Naive thymus-derived CD4-positive, alpha-beta T cell (primary cell): ENCODE measurements at regions of chr10 and their contacts with region 1.

Region 1: DNA sequence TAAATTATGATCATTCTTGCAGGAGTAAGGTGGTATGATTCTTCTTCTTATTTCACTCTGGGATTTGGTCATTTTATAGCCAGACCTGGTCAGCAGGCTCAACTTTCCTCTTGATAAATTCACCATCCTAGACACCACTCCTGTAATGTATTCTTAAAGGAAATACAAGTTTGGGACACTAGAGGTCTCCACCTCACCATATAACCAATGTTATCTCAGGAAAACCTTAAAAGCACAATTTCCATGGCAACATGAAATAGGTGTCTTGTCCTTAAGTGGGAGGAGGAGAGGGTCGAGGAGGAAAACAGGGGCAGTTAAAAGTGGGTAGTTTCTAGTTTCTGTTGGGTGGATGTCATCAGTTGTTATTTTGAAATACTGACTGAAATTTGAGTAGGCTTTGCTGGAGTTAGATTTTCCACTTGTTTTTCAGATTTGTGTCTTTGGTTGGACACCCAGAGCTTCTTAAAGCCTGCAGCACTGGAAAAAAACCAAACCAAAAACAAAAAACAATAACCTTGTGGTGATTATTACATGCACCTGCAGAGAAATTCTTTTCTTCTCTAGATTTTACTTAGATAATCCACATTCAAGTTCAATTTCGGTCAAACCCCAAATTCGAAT is 163.1 kb downstream of the PRKCQ start:
- DNase-seq: peak in 7 of 9 donors; percentile 36 to 59 (median 43)
- ATAC-seq: peak; percentile 88
- H3K4me3 ChIP-seq: no peak overlapping the region
- H3K4me3 Mint-ChIP-seq: no peak overlapping the region
- H3K27ac ChIP-seq: no peak overlapping the region
- H3K27ac Mint-ChIP-seq: no peak overlapping the region
- H3K4me1 ChIP-seq: no peaks in the 10 kb centered on the region
- H3K4me1 Mint-ChIP-seq: peaks cover 0 to 6% (median 0%) of the 10 kb centered on the region in 7 donors
- H3K27me3 ChIP-seq: no peaks in the 10 kb centered on the region
- H3K27me3 Mint-ChIP-seq: no peaks in the 10 kb centered on the region

Region 2: DNA sequence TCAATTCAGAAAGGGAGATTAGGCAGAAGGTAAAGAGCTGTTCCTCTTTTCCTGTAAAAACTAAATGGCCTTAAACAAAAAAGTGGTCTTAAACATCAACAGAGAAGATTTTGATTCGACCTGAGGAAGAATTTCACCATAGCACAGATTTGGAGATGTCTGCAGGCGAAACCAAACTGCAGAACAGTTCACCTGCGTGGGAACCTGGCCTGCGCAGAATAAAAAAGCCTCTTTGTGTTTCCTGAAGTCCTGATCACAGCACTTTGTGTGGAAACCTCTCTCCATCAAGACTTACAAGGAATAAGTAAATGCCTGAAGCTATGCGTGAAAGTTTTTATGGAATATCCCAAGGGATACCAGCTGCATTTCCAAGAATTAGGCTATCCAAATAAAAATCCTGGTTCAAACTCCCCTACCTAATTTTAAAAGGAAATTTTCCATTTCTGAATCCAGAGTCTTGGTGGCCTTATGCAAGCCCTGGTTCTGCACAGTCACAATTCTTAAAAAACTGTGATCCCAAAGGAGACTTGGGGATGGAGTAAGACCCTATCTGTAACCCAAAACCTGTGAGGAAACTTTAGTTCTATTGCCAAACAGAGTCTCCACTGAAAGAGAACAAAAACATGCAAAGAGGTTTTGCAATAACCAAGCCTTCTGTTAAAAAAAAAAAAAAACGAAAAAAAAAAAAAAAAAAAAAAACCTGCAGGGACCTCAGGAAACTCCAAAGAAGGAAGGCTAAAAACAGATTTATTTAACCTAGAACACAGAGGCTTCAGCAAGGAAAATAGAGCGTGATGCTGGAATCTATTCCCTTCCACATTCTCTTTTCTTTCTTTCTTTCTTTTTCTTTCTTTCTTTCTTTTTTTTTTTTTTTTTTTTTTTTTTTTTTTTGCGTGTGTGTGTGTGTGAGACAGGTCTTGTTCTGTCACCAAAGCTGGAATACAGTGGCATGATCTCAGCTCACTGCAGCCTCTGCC is 881.8 kb before region 1 on chr10:
- CTCF ChIA-PET with region 1: no interaction called
- POLR2A ChIA-PET with region 1: no interaction called
- intact Hi-C with region 1: no loop called
- DNase-seq: no peak
- ATAC-seq: no peak
- H3K4me3 ChIP-seq: no peak overlapping the region
- H3K4me3 Mint-ChIP-seq: no peak overlapping the region
- H3K27ac ChIP-seq: no peak overlapping the region
- H3K27ac Mint-ChIP-seq: no peak overlapping the region
- H3K4me1 ChIP-seq: no peaks in the 10 kb centered on the region
- H3K4me1 Mint-ChIP-seq: peaks cover 0 to 8% (median 4%) of the 10 kb centered on the region in 7 donors
- H3K27me3 ChIP-seq: no peaks in the 10 kb centered on the region
- H3K27me3 Mint-ChIP-seq: peaks cover 0 to 9% (median 0%) of the 10 kb centered on the region in 5 donors

Region 3: GRCh38 chr10:5737352-5737751 is 679.6 kb before region 1 on chr10:
- CTCF ChIA-PET with region 1: no interaction called
- POLR2A ChIA-PET with region 1: no interaction called
- intact Hi-C with region 1: no loop called
- DNase-seq: no peak
- ATAC-seq: no peak
- H3K4me3 ChIP-seq: no peak overlapping the region
- H3K4me3 Mint-ChIP-seq: peak overlapping the region in 1 of 10 donors; percentile 30
- H3K27ac ChIP-seq: no peak overlapping the region
- H3K27ac Mint-ChIP-seq: peak overlapping the region in 5 of 9 donors; percentile 20 to 80 (median 37)
- H3K4me1 ChIP-seq: no peaks in the 10 kb centered on the region
- H3K4me1 Mint-ChIP-seq: peaks cover 9 to 37% (median 22%) of the 10 kb centered on the region in 7 donors
- H3K27me3 ChIP-seq: no peaks in the 10 kb centered on the region
- H3K27me3 Mint-ChIP-seq: no peaks in the 10 kb centered on the region

Region 4: GRCh38 chr10:6445501-6446316 is 28.7 kb after region 1 on chr10:
- CTCF ChIA-PET with region 1: interaction called, 4 read pairs
- POLR2A ChIA-PET with region 1: no interaction called
- intact Hi-C with region 1: loop called in 1 of 2 experiments (anchors 1 kb)
- DNase-seq: peak in 8 of 9 donors; percentile 28 to 49 (median 43)
- ATAC-seq: peak; percentile 64
- H3K4me3 ChIP-seq: no peak overlapping the region
- H3K4me3 Mint-ChIP-seq: peak overlapping the region in 5 of 10 donors; percentile 0 to 60 (median 30)
- H3K27ac ChIP-seq: peak overlapping the region; percentile 17
- H3K27ac Mint-ChIP-seq: peak overlapping the region; percentile 4 to 84 (median 66)
- H3K4me1 ChIP-seq: no peaks in the 10 kb centered on the region
- H3K4me1 Mint-ChIP-seq: peaks cover 10 to 49% (median 31%) of the 10 kb centered on the region in 7 donors
- H3K27me3 ChIP-seq: no peaks in the 10 kb centered on the region
- H3K27me3 Mint-ChIP-seq: no peaks in the 10 kb centered on the region

Region 5: DNA sequence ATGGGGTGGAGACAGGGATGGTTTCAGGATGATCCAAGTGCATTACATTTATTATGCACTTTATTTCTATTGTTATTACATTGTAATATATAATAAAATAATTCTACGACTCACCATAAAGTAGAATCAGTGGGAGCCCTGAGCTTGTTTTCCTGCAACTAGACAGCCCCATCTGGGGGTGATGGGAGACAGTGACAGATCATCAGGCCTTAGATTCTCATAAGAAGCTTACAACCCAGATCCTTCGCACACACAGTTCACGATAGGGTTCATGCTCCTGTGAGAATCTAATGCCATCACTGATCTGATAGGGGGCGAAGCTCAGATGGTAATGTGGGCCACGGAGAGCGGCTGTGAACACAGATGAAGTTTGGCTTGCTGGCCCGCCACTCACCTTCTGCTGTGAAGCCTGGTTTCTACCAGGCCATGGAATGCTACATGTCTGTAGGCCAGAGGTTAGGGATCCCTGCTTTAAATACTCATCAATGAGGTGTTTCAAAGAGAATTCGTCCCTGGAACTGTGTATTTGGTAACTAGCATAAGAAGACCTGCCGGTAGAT is 184.3 kb after region 1 on chr10:
- CTCF ChIA-PET with region 1: interaction called, 3 read pairs
- POLR2A ChIA-PET with region 1: no interaction called
- intact Hi-C with region 1: loop called in 1 of 2 experiments (anchors 1 kb)
- DNase-seq: peak in 6 of 9 donors; percentile 62 to 71 (median 65)
- ATAC-seq: peak; percentile 65
- H3K4me3 ChIP-seq: no peak overlapping the region
- H3K4me3 Mint-ChIP-seq: peak overlapping the region; percentile 52 to 86 (median 67)
- H3K27ac ChIP-seq: peak overlapping the region; percentile 63
- H3K27ac Mint-ChIP-seq: peak overlapping the region; percentile 60 to 100 (median 96)
- H3K4me1 ChIP-seq: peaks cover 17 to 56% of the 10 kb centered on the region in 2 donors
- H3K4me1 Mint-ChIP-seq: peaks cover 37 to 94% (median 86%) of the 10 kb centered on the region in 7 donors
- H3K27me3 ChIP-seq: no peaks in the 10 kb centered on the region
- H3K27me3 Mint-ChIP-seq: no peaks in the 10 kb centered on the region

Region 6: DNA sequence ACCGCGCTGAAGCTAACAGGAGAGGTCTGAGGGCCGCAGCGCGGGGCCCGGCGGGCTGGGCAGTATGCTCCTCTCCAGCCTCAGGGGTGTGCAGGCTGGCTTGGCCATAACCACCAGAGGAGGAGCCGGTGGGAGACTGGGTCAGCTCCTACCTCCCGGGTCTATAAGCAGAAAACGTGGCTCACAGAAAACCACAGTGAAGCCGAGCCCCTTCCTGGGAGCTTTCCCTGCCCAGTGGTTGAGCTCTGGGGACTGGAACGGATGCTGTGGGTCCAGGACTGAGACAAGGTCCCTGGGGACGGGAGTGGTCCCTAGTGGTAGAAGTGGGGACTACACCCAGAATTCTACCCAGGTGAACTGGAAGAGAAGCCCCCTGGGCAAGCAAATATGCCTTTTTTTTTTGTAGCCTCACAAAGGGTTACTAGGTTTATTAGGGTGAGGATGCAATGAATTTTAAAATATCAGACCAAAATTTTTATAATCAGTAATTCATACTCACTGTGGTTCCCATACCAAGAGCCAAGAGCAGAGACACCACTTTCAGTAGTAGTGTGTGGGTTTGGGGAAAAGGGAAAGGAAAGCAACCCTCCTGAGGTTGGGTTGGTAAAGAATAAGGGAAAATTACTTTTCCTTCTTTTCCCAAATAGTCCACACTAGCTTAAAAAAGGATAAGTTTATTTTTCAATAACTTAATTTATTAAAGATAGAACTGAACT is 231.0 kb after region 1 on chr10:
- CTCF ChIA-PET with region 1: interaction called, 5 read pairs
- POLR2A ChIA-PET with region 1: no interaction called
- intact Hi-C with region 1: loop called in 1 of 2 experiments (anchors 1 kb)
- DNase-seq: peak; percentile 37 to 75 (median 64)
- ATAC-seq: peak; percentile 94
- H3K4me3 ChIP-seq: no peak overlapping the region
- H3K4me3 Mint-ChIP-seq: peak overlapping the region in 1 of 10 donors; percentile 32
- H3K27ac ChIP-seq: no peak overlapping the region
- H3K27ac Mint-ChIP-seq: peak overlapping the region in 3 of 9 donors; percentile 19 to 67 (median 38)
- H3K4me1 ChIP-seq: peaks cover 5 to 10% of the 10 kb centered on the region in 2 donors
- H3K4me1 Mint-ChIP-seq: peaks cover 0 to 46% (median 27%) of the 10 kb centered on the region in 7 donors
- H3K27me3 ChIP-seq: no peaks in the 10 kb centered on the region
- H3K27me3 Mint-ChIP-seq: no peaks in the 10 kb centered on the region

Region 7: DNA sequence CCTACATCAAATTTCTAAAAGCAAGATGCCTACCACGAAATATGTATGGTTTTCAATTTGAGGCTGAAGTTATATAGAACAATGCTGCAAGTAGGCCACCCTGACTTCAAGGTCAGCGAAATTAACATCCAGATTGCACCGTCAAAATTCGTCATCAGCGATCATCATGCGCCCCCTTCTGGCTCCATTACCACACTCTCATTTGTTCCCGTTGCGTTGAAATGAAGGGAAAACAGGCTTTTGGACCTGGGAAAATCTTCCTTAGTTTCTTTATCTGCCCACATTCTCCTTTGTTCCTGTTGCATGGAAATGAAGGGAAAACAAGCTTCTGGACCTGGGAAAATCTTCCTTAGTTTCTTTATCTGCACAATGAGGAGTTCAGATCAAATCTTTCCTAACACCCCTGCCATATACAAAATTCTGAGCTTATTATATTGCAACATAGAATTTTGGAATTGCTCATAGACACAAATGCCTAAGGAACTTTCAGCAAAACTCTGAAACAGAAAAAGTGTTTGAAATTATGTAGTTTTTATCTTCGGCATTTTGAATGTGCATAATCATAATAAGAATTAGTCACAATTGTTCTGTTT is 261.3 kb after region 1 on chr10:
- CTCF ChIA-PET with region 1: interaction called, 32 read pairs
- POLR2A ChIA-PET with region 1: no interaction called
- intact Hi-C with region 1: loop called (anchors 1 kb)
- DNase-seq: peak in 8 of 9 donors; percentile 24 to 55 (median 48)
- ATAC-seq: peak; percentile 56
- H3K4me3 ChIP-seq: no peak overlapping the region
- H3K4me3 Mint-ChIP-seq: no peak overlapping the region
- H3K27ac ChIP-seq: no peak overlapping the region
- H3K27ac Mint-ChIP-seq: no peak overlapping the region
- H3K4me1 ChIP-seq: no peaks in the 10 kb centered on the region
- H3K4me1 Mint-ChIP-seq: peaks cover 0 to 12% (median 0%) of the 10 kb centered on the region in 7 donors
- H3K27me3 ChIP-seq: no peaks in the 10 kb centered on the region
- H3K27me3 Mint-ChIP-seq: peaks cover 0 to 66% (median 0%) of the 10 kb centered on the region in 5 donors

Region 8: GRCh38 chr10:6920072-6921019 is 503.3 kb after region 1 on chr10:
- CTCF ChIA-PET with region 1: no interaction called
- POLR2A ChIA-PET with region 1: no interaction called
- intact Hi-C with region 1: loop called in 1 of 2 experiments (anchors 10 kb)
- DNase-seq: peak; percentile 47 to 74 (median 69)
- ATAC-seq: peak; percentile 97
- H3K4me3 ChIP-seq: no peak overlapping the region
- H3K4me3 Mint-ChIP-seq: peak overlapping the region in 7 of 10 donors; percentile 13 to 45 (median 26)
- H3K27ac ChIP-seq: no peak overlapping the region
- H3K27ac Mint-ChIP-seq: no peak overlapping the region
- H3K4me1 ChIP-seq: peaks cover 0 to 21% of the 10 kb centered on the region in 2 donors
- H3K4me1 Mint-ChIP-seq: peaks cover 0 to 25% (median 12%) of the 10 kb centered on the region in 7 donors
- H3K27me3 ChIP-seq: no peaks in the 10 kb centered on the region
- H3K27me3 Mint-ChIP-seq: peaks cover 0 to 14% (median 5%) of the 10 kb centered on the region in 5 donors

Region 9: DNA sequence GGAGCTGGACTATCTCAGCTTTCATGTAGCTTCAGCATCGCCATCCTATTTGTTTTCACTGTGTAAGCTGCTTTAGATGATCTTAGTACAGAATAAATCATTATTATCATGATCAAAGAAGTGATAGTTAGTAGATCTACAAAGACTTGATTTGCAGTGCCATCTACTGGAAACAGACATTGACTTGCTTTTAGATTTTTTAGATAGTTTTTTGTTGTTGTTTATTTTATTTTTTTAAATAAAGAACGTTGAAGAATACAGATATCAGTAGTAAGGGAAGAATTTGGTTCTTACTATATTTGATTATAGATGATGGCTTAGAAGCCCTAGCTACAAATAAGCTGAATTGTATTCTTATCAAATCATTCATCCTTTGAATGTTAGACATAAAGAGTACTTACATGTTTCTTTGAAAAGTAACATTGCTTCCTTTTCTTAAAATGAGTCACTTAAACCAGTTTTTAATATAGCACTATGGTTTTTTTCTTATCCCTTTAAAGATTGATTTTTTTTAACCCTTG is 1000.2 kb after region 1 on chr10:
- CTCF ChIA-PET with region 1: no interaction called
- POLR2A ChIA-PET with region 1: no interaction called
- intact Hi-C with region 1: loop called (anchors 1 to 5 kb)
- DNase-seq: peak in 7 of 9 donors; percentile 36 to 62 (median 46)
- ATAC-seq: peak; percentile 69
- H3K4me3 ChIP-seq: no peak overlapping the region
- H3K4me3 Mint-ChIP-seq: no peak overlapping the region
- H3K27ac ChIP-seq: no peak overlapping the region
- H3K27ac Mint-ChIP-seq: peak overlapping the region in 3 of 9 donors; percentile 27 to 79 (median 29)
- H3K4me1 ChIP-seq: peaks cover 5 to 10% of the 10 kb centered on the region in 2 donors
- H3K4me1 Mint-ChIP-seq: peaks cover 8 to 35% (median 25%) of the 10 kb centered on the region in 7 donors
- H3K27me3 ChIP-seq: no peaks in the 10 kb centered on the region
- H3K27me3 Mint-ChIP-seq: peaks cover 0 to 33% (median 0%) of the 10 kb centered on the region in 5 donors

Region 10: DNA sequence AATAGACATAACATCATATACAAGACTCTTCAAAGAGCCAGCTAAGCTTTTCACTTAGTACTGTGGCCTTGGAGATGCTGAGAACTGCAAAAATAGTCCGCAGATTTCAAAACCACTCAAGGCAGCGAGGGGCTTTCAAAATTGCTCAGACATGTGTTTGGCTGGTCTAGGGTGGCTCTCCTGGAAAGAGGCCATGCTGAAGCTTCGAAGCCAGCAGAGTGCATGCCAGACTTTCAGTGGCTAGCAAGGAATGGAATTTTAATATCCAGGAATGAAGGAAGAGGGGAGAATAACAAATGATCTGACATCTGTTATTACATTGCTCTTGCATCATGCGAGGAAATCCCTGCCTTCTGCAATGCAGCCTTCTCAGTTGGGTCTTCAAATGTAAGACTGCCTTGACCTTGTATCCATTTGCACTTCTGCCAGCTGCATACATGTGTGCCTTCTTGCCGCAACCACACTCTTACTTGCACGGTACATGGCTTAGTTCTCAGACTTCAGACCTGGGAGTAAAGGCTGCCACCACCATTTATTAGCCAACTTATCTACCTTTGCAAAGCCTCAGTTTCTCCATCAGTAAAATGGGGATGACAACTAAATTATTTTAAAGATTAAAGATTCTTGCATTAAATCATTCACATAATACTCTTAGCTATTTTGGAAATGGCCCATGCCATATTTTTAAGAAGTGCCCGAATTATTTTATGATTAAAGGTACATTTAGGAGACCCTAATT is 1193.8 kb after region 1 on chr10:
- CTCF ChIA-PET with region 1: no interaction called
- POLR2A ChIA-PET with region 1: no interaction called
- intact Hi-C with region 1: no loop called
- DNase-seq: no peak
- ATAC-seq: no peak
- H3K4me3 ChIP-seq: no peak overlapping the region
- H3K4me3 Mint-ChIP-seq: no peak overlapping the region
- H3K27ac ChIP-seq: no peak overlapping the region
- H3K27ac Mint-ChIP-seq: no peak overlapping the region
- H3K4me1 ChIP-seq: no peaks in the 10 kb centered on the region
- H3K4me1 Mint-ChIP-seq: no peaks in the 10 kb centered on the region
- H3K27me3 ChIP-seq: peaks cover 0 to 3% of the 10 kb centered on the region in 2 donors
- H3K27me3 Mint-ChIP-seq: peaks cover 0 to 9% (median 0%) of the 10 kb centered on the region in 5 donors